Activated CD4-positive, alpha-beta T cell treated with anti-CD3 and anti-CD28 coated beads for 36 hours (primary cell): ENCODE measurements at regions of chr14 and their contacts with region 1.

Region 1: GRCh38 chr14:64540208-64541157 is at the start of gene HSPA2:
- DNase-seq: peak; percentile 97
- ATAC-seq: peak; percentile 95
- H3K4me3 Mint-ChIP-seq: peak within 1 kb of the TSS; percentile 81
- H3K27ac Mint-ChIP-seq: peak within 1 kb of the TSS; percentile 96
- H3K4me1 Mint-ChIP-seq: peaks cover 28% of the 10 kb centered on the region
- H3K27me3 Mint-ChIP-seq: peaks cover 39% of the 10 kb centered on the region
- total RNA-seq, gene HSPA2: 3.2 to 4.1 TPM

Region 2: DNA sequence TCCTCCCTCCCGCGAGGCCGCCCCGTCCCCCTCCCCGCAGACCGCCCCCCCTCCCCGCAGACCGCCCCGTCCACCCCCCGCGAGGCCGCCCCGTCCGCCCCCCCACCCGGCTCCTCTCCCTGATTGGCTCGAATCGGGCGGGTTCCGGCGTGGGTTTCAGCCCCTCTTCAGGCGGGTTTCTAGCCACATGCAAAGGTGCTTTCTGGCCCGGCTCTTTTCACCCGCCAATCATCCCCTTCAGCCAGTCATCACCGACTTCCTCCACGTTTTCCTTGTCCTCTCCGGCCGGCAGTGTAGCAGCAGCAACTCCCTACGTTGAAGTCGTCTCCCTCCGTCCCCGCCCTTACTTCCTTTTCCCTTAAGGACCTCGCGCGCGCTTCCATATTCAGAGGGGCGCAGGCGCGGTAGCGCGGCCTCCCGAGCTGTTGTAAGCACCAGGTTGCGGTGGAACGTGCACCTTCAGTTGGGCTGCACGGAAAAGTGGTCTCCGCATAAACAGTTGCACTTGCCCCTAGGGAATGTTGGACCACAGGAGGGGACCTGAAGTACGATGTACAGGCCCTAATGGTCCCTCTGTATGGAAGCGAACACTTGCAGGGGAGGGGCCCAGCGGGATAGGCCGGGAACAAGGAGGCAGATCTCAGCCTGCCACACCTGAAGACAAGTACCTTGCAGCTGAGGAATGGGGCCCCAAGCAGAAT is 201.7 kb before region 1 on chr14:
- CTCF ChIA-PET with region 1: interaction called, 3 read pairs
- POLR2A ChIA-PET with region 1: no interaction called
- intact Hi-C with region 1: loop called in 1 of 2 experiments (anchors 1 kb)
- DNase-seq: peak; percentile 92
- ATAC-seq: peak; percentile 88
- H3K4me3 Mint-ChIP-seq: peak overlapping the region; percentile 93
- H3K27ac Mint-ChIP-seq: peak overlapping the region; percentile 87
- H3K4me1 Mint-ChIP-seq: peaks cover 18% of the 10 kb centered on the region
- H3K27me3 Mint-ChIP-seq: no peaks in the 10 kb centered on the region